Motor neuron (in vitro differentiated cells): ENCODE measurements at regions of chr10 and their contacts with region 1.

Region 1: GRCh38 chr10:51960494-51960895 is 261.1 kb upstream of the CSTF2T start:
- ATAC-seq: peak; percentile 33 to 81 (median 52)
- H3K4me3 ChIP-seq: no peak overlapping the region
- H3K27ac ChIP-seq: no peak overlapping the region
- H3K4me1 ChIP-seq: no peaks in the 10 kb centered on the region

Region 2: GRCh38 chr10:51010977-51011376 is 949.5 kb before region 1 on chr10:
- in situ Hi-C with region 1: loop called in 1 of 9 experiments (anchors 25 kb)
- ATAC-seq: peak in 3 of 8 experiments; percentile 24 to 61 (median 45)
- H3K4me3 ChIP-seq: no peak overlapping the region
- H3K27ac ChIP-seq: no peak overlapping the region
- H3K4me1 ChIP-seq: no peaks in the 10 kb centered on the region

Region 3: GRCh38 chr10:51074238-51075028 is 886.1 kb before region 1 on chr10 and contains the start of gene PRKG1:
- in situ Hi-C with region 1: loop called in 5 of 9 experiments (anchors 25 kb)
- ATAC-seq: peak; percentile 81 to 95 (median 90)
- H3K4me3 ChIP-seq: peak within 1 kb of the TSS; percentile 49 to 84 (median 57)
- H3K27ac ChIP-seq: peak within 1 kb of the TSS in 1 of 2 donors; percentile 54
- H3K4me1 ChIP-seq: peaks cover 8 to 14% of the 10 kb centered on the region in 2 donors
- total RNA-seq, gene PRKG1: 5.6 to 40.7 (median 6.6) TPM

Region 4: GRCh38 chr10:51422311-51423120 is 538.0 kb before region 1 on chr10:
- in situ Hi-C with region 1: loop called in 1 of 9 experiments (anchors 25 kb)
- ATAC-seq: peak in 4 of 8 experiments; percentile 59 to 92 (median 84)
- H3K4me3 ChIP-seq: no peak overlapping the region
- H3K27ac ChIP-seq: no peak overlapping the region
- H3K4me1 ChIP-seq: peaks cover 7 to 18% of the 10 kb centered on the region in 2 donors

Region 5: GRCh38 chr10:51699475-51700227 is 260.8 kb before region 1 on chr10 and contains the start of gene CSTF2T:
- in situ Hi-C with region 1: loop called in 1 of 9 experiments (anchors 25 kb)
- ATAC-seq: peak; percentile 88 to 96 (median 94)
- H3K4me3 ChIP-seq: peak within 1 kb of the TSS; percentile 53 to 95 (median 92)
- H3K27ac ChIP-seq: peak within 1 kb of the TSS; percentile 99 to 100
- H3K4me1 ChIP-seq: peaks cover 16 to 41% of the 10 kb centered on the region in 2 donors
- total RNA-seq, gene CSTF2T: 22.9 to 34.2 (median 26.9) TPM